K562 (cell line): ENCODE measurements at regions of chr17 and their contacts with region 1.

Region 1: DNA sequence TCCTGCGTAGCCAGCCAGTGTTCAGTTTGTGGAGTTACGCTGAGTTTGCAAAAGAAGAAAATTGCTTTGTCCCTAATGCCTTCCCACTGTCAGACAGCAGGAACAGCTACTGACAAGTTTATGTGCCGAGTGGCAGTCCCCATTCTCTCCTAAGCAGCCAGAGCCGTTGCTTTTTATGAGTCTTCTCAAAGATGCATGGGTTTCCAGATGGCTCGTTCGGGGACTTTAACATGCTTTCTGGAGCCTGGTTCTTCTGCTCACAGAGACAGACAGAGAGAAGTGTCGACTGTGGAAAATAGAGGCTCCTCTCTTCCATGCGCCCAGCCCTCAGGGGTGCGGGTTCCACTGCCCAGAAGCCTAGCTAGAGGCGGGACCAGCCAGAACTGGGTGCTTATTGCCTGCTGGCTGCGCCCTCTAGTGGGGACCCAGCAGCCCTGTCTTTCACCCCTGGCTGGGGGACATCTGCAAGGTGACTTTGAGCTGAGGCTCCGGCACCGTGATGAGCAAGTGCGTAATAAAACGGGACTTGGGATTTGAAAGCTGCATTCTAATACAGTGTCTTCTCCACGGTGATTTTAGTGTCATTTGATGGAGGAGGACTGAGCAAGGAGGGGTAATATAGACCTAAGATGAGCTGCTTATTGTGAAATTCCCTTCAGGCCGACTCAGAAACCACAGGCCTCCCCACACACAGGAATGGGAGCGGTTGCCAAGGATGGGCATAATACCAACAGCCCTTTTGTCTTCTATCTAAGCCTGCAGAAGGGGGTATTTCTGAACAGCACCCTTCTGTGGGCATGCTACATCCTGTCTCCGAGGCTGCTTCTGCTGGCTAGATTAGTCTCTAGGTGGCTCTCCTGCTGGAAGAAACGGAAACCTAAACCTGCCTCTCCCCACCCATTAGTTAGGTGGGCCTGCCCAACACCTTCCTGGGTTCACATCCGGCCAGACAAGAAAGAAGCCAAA is 73.1 kb downstream of the CCDC182 start:
- DNase-seq: peak; percentile 76 to 86 (median 82)
- ATAC-seq: peak; percentile 100
- H3K4me3 ChIP-seq: no peak overlapping the region
- H3K27ac ChIP-seq: no peak overlapping the region
- H3K4me1 ChIP-seq: no peaks in the 10 kb centered on the region
- H3K27me3 ChIP-seq: no peaks in the 10 kb centered on the region
- CTCF ChIP-seq: peak; percentile 88 to 92 (median 91)
- EP300 ChIP-seq: no peak
- POLR2A ChIP-seq: no peak
- RAD21 ChIP-seq: peak; percentile 70 to 87

Region 2: GRCh38 chr17:57121338-57122042 is 550.5 kb before region 1 on chr17:
- CTCF ChIA-PET with region 1: no interaction called
- POLR2A ChIA-PET with region 1: no interaction called
- in situ Hi-C with region 1: no loop called
- intact Hi-C with region 1: loop called (anchors 5 kb)
- DNase-seq: peak; percentile 54 to 64 (median 57)
- ATAC-seq: peak; percentile 90
- H3K4me3 ChIP-seq: no peak overlapping the region
- H3K27ac ChIP-seq: no peak overlapping the region
- H3K4me1 ChIP-seq: peaks cover 0 to 3% of the 10 kb centered on the region in 2 experiments; a peak in 1 of 5 replicates
- H3K27me3 ChIP-seq: no peaks in the 10 kb centered on the region
- CTCF ChIP-seq: peak; percentile 62 to 75 (median 69)
- EP300 ChIP-seq: no peak
- POLR2A ChIP-seq: no peak
- RAD21 ChIP-seq: peak; percentile 47 to 61

Region 3: GRCh38 chr17:57243171-57243948 is 428.6 kb before region 1 on chr17:
- CTCF ChIA-PET with region 1: interaction called, 12 read pairs
- POLR2A ChIA-PET with region 1: no interaction called
- in situ Hi-C with region 1: no loop called
- intact Hi-C with region 1: loop called (anchors 2 kb)
- DNase-seq: peak; percentile 78 to 83 (median 80)
- ATAC-seq: peak; percentile 92
- H3K4me3 ChIP-seq: no peak overlapping the region
- H3K27ac ChIP-seq: no peak overlapping the region
- H3K4me1 ChIP-seq: peaks cover 0 to 3% of the 10 kb centered on the region in 2 experiments; a peak in 1 of 5 replicates
- H3K27me3 ChIP-seq: peaks cover 0 to 6% of the 10 kb centered on the region in 2 experiments; a peak in 1 of 5 replicates
- CTCF ChIP-seq: peak; percentile 100
- EP300 ChIP-seq: 0 out of 2 replicates have a peak, but pooled peaks have one; percentile 27
- POLR2A ChIP-seq: no peak
- RAD21 ChIP-seq: peak; percentile 97 to 98

Region 4: GRCh38 chr17:57455063-57455914 is 216.7 kb before region 1 on chr17:
- CTCF ChIA-PET with region 1: interaction called, 3 read pairs
- POLR2A ChIA-PET with region 1: no interaction called
- in situ Hi-C with region 1: no loop called
- intact Hi-C with region 1: loop called (anchors 5 kb)
- DNase-seq: no peak
- ATAC-seq: no peak
- H3K4me3 ChIP-seq: no peak overlapping the region
- H3K27ac ChIP-seq: no peak overlapping the region
- H3K4me1 ChIP-seq: peaks cover 8 to 13% of the 10 kb centered on the region in 2 experiments; a peak in 4 of 5 replicates
- H3K27me3 ChIP-seq: no peaks in the 10 kb centered on the region
- CTCF ChIP-seq: no peak
- EP300 ChIP-seq: no peak
- POLR2A ChIP-seq: no peak
- RAD21 ChIP-seq: no peak

Region 5: GRCh38 chr17:57552114-57552624 is 119.8 kb before region 1 on chr17:
- CTCF ChIA-PET with region 1: no interaction called
- POLR2A ChIA-PET with region 1: no interaction called
- in situ Hi-C with region 1: no loop called
- intact Hi-C with region 1: loop called (anchors 5 kb)
- DNase-seq: peak; percentile 58 to 68 (median 65)
- ATAC-seq: peak; percentile 83
- H3K4me3 ChIP-seq: no peak overlapping the region
- H3K27ac ChIP-seq: no peak overlapping the region
- H3K4me1 ChIP-seq: peaks cover 29% of the 10 kb centered on the region in 2 experiments; a peak in 4 of 5 replicates
- H3K27me3 ChIP-seq: no peaks in the 10 kb centered on the region
- CTCF ChIP-seq: peak; percentile 62 to 87 (median 70)
- EP300 ChIP-seq: no peak
- POLR2A ChIP-seq: no peak
- RAD21 ChIP-seq: peak in 1 of 2 experiments; percentile 41; a peak in 2 of 4 replicates

Region 6: GRCh38 chr17:57597531-57598453 is 74.2 kb before region 1 on chr17:
- CTCF ChIA-PET with region 1: interaction called, 4 read pairs
- POLR2A ChIA-PET with region 1: no interaction called
- in situ Hi-C with region 1: no loop called
- intact Hi-C with region 1: loop called (anchors 2 kb)
- DNase-seq: peak; percentile 50 to 61 (median 60)
- ATAC-seq: peak; percentile 80
- H3K4me3 ChIP-seq: no peak overlapping the region
- H3K27ac ChIP-seq: no peak overlapping the region
- H3K4me1 ChIP-seq: no peaks in the 10 kb centered on the region
- H3K27me3 ChIP-seq: no peaks in the 10 kb centered on the region
- CTCF ChIP-seq: peak; percentile 67 to 81 (median 76)
- EP300 ChIP-seq: no peak
- POLR2A ChIP-seq: no peak
- RAD21 ChIP-seq: peak; percentile 46 to 75; a peak in 3 of 4 replicates